Heart left ventricle (tissue), 16 donors: ENCODE measurements at regions of chr3 and their contacts with region 1.

Region 1: GRCh38 chr3:194134757-194135528 is 1.0 kb upstream of the HES1 start:
- DNase-seq: peak; percentile 95 to 96 (median 95)
- ATAC-seq: peak; percentile 60 to 81 (median 70)
- H3K4me3 ChIP-seq: peak overlapping the region; percentile 44 to 92 (median 75)
- H3K27ac ChIP-seq: peak overlapping the region; percentile 90 to 99 (median 97)
- H3K4me1 ChIP-seq: peaks cover 4 to 70% (median 45%) of the 10 kb centered on the region in 12 donors
- H3K27me3 ChIP-seq: peaks cover 0 to 63% (median 0%) of the 10 kb centered on the region in 9 donors
- CTCF ChIP-seq: no peak
- POLR2A ChIP-seq: peak in 1 of 2 donors; percentile 48

Region 2: GRCh38 chr3:193780810-193781472 is 354.0 kb before region 1 on chr3:
- intact Hi-C with region 1: loop called in 6 of 10 experiments (anchors 1 to 5 kb)
- DNase-seq: peak; percentile 66 to 84 (median 78)
- ATAC-seq: peak; percentile 78 to 94 (median 91)
- H3K4me3 ChIP-seq: no peak overlapping the region
- H3K27ac ChIP-seq: peak overlapping the region in 1 of 12 donors; percentile 44
- H3K4me1 ChIP-seq: peaks cover 0 to 16% (median 7%) of the 10 kb centered on the region in 12 donors
- H3K27me3 ChIP-seq: peaks cover 0 to 61% (median 29%) of the 10 kb centered on the region in 9 donors
- CTCF ChIP-seq: peak; percentile 57 to 87 (median 80)
- POLR2A ChIP-seq: no peak

Region 3: DNA sequence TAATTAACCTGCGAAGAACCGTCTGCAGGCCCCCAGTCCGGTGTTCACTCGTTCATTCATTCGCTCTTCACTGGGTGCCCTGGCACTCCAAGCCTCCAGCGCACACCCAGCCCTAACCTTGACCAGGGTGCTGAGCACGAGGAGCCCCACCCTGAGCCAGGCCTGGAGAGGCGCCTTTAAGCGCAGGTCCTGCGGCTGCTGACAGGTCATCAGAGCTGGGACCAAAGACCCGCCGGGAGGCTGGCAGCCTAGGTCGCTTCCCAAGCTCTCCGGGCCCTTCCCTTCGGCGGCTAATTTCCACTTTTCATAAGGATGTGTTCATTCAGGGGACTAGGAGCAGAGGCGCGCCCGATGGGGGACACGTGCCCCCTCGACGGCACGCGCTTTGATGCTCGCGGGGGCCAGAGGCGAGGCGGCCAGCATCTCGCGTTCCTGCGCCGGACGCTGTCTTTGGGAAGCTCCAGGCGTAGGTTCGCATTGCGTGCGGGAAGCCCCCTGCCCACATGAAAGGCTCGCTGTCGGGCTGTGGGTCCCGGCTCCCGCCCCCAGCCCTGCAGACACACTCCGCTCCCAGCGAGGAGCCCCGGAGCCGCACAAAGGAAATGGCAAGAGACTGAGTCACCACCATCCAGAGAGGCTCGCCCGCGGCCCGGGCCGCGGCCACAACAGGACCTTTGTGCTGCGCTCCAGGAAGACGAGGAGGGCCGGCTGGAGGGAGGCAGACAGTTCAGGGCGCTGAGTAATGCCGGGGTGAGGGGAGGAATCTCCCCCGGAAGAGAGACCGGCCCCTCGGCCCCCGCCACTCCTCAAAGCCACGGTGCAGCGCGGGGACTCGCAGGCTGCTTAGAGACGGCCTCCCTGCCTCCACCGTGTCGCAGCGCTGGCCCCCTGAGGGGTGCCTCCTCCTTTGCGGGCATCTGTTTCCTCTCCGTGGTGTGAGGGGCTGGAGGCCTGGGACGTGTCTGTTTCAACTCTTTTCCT is 265.4 kb before region 1 on chr3:
- intact Hi-C with region 1: loop called in 1 of 10 experiments (anchors 10 kb)
- DNase-seq: peak; percentile 43 to 83 (median 68)
- ATAC-seq: peak in 3 of 4 donors; percentile 82 to 88 (median 84)
- H3K4me3 ChIP-seq: peak overlapping the region in 3 of 12 donors; percentile 3 to 32 (median 7)
- H3K27ac ChIP-seq: peak overlapping the region in 1 of 12 donors; percentile 24
- H3K4me1 ChIP-seq: peaks cover 0 to 14% (median 7%) of the 10 kb centered on the region in 12 donors
- H3K27me3 ChIP-seq: peaks cover 0 to 22% (median 7%) of the 10 kb centered on the region in 9 donors
- CTCF ChIP-seq: no peak
- POLR2A ChIP-seq: no peak

Region 4: DNA sequence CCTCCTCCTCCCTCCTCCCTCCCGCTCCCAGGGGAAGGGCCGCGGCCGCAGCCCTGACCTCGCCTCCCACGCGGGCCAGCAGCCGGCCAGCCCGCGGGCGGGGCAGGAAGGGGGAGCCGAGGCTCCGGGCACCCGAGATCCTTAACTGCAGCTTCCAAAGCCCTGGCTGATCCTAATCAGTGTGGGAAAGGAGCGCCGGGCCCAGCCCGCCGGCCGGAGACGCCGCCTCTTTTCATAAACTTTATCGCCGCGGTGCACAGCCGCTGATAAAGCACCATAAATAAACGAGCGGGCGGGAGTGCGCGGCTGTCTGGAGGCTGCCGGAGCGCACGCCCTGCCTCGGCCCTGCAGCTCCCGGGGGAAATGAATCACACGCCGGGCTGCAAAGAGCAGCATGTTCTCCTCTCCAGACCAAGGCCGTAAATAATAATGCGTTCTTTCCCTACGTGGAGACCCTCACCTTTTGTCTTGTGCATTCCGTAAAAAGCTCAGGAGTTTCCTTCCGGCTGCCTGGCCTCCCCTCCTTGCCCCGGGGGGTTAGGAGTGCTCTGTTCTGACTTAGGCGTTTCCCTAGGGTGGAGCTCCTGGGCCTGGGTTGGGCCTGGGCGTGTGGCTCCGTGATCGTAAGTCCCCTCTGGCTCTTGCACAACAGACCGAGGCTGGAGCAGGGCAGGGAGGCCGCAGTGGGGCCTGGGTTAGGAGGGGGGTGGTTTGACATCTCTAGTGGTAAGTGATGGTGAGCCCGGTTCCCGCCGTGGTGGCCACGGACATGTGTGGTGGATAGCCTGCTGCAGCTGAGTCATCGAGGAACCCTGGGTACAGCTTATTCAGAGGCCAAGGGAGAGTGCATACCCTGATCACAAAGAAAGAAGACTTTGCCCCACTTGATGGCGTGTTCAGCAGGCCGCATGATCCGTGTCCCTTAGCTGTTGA is 131.6 kb before region 1 on chr3:
- intact Hi-C with region 1: loop called (anchors 1 to 10 kb)
- DNase-seq: peak; percentile 92 to 95 (median 93)
- ATAC-seq: peak; percentile 85 to 95 (median 94)
- H3K4me3 ChIP-seq: peak overlapping the region in 11 of 12 donors; percentile 1 to 54 (median 51)
- H3K27ac ChIP-seq: peak overlapping the region; percentile 40 to 85 (median 74)
- H3K4me1 ChIP-seq: peaks cover 0 to 42% (median 31%) of the 10 kb centered on the region in 12 donors
- H3K27me3 ChIP-seq: peaks cover 0 to 13% (median 0%) of the 10 kb centered on the region in 9 donors
- CTCF ChIP-seq: no peak
- POLR2A ChIP-seq: no peak

Region 5: DNA sequence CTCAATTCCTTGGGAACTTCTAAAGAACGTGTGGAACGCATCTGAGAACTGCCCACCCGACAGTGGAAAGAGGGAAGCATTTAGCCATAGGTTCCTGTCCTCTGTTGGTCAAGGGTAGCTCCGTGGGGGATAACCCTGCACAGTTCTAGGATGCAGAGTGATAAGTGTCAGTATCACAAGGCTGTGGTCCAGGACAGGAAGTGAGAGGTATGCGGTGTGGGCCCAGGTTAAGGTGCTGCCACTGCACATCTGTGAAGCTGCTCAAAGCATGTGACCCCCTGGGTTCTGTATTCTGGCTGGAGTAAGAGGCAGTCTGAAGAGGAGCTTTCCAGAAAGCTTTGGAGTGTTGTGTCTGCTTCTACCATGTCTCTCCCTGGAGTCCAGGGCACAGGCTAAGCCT is 50.7 kb before region 1 on chr3:
- intact Hi-C with region 1: loop called in 2 of 10 experiments (anchors 5 to 10 kb)
- DNase-seq: no peak
- ATAC-seq: no peak
- H3K4me3 ChIP-seq: no peak overlapping the region
- H3K27ac ChIP-seq: no peak overlapping the region
- H3K4me1 ChIP-seq: peaks cover 0 to 30% (median 15%) of the 10 kb centered on the region in 12 donors
- H3K27me3 ChIP-seq: peaks cover 0 to 2% (median 0%) of the 10 kb centered on the region in 9 donors
- CTCF ChIP-seq: no peak
- POLR2A ChIP-seq: no peak

Region 6: DNA sequence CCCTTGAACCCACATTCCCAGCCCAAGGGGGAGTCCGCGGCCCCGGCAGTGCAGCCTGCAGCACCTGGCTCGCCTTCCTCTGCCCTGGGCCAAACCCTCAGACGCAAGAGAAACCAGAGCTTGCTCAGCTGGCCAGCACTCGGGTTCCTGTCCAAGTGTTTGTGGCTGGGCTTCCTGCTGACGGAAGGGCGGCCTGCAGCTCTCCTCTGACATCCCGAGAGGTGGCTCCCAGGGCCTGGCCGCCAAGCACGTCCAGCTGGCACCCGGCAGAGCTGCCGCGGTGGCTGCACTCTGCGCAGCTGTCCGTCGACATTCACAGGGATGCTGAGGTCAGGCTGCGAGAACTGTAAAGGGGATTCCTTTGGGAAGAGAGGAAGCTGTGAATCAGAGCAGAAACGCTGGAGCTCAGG is 130.5 kb after region 1 on chr3:
- intact Hi-C with region 1: loop called in 8 of 10 experiments (anchors 2 to 5 kb)
- DNase-seq: peak; percentile 93 to 97 (median 94)
- ATAC-seq: peak; percentile 80 to 88 (median 81)
- H3K4me3 ChIP-seq: peak overlapping the region in 4 of 12 donors; percentile 2 to 25 (median 6)
- H3K27ac ChIP-seq: peak overlapping the region in 11 of 12 donors; percentile 56 to 93 (median 80)
- H3K4me1 ChIP-seq: peaks cover 9 to 62% (median 47%) of the 10 kb centered on the region in 12 donors
- H3K27me3 ChIP-seq: no peaks in the 10 kb centered on the region
- CTCF ChIP-seq: peak in 1 of 12 donors; percentile 19
- POLR2A ChIP-seq: no peak

Region 7: DNA sequence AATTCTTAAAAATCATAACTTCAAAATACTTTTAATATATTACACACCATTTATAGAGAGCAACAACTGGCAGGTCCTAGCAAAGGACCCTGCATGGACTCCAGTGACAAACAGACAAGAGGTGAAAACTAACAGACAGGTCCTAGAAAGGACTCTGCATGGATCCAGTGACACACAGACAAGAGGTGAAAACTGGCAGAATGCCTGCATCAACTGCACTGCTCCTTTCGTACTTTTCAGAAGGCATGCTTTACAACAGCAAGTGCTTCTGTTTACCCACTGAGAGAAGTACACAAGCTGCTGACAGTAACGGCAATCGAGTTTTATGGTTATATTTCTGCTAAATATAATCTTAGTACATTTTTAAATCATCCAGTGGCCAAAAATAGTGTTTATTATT is 288.4 kb after region 1 on chr3:
- intact Hi-C with region 1: no loop called
- DNase-seq: peak in 1 of 5 donors; percentile 17
- ATAC-seq: peak; percentile 59 to 79 (median 73)
- H3K4me3 ChIP-seq: no peak overlapping the region
- H3K27ac ChIP-seq: no peak overlapping the region
- H3K4me1 ChIP-seq: peaks cover 0 to 18% (median 0%) of the 10 kb centered on the region in 12 donors
- H3K27me3 ChIP-seq: no peaks in the 10 kb centered on the region
- CTCF ChIP-seq: no peak
- POLR2A ChIP-seq: no peak